BJ (cell line): ENCODE measurements at regions of chr17 and their contacts with region 1.

Region 1: DNA sequence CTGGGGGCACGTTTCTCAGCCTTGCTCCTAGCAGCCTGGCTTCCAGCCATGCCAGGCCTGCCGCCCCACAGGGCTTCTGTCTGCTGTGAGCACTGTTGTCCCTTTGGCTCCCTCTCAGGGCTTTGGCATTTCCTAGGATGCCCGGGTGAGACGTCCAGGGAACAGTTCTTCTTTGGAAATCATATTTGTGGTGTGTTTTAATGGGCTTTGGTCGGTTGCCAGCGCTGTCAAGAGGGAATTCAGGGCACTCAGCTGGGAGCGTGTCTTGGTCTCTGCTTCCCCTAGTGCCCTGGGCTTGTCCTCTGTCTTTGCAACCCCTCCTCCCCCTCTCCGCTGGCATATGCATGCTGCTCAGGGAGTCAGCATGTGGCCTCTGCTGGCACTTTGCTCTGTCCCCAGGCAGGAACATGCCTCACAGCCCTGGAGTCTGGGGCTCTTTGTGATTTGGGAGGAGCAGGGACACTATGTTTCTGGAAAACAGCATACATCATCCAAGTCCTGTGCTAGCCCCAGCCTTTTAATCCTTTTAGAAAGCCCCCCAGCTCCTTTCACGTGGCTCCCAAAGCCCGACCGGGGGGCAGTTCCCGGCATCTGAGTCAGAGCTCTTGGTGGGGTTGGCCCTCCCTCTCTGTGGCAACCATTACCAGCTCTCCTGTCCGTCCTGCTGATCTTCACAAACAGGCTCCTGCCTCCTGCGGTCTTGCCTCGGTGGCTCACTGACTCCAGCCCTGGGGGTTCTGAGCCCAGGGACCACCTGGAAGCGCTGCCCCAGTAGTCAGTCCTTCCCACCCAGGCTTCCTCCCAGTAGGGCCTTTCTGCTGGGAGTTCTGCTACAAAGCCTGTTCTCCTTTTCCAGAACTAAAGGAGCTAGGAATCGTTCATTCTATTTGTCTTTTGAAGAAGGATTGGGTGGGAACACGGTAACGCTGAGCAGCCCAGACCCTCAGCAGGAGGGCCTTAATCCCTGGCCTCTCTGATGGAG is 26.7 kb downstream of the SAP30BP start:
- DNase-seq: peak; percentile 93
- H3K4me3 ChIP-seq: no peak overlapping the region
- H3K27me3 ChIP-seq: no peaks in the 10 kb centered on the region
- CTCF ChIP-seq: peak; percentile 47

Region 2: GRCh38 chr17:75679706-75680442 is 13.9 kb before region 1 on chr17:
- CTCF ChIA-PET with region 1: interaction called, 44 read pairs
- POLR2A ChIA-PET with region 1: interaction called, 4 read pairs
- DNase-seq: peak; percentile 51
- H3K4me3 ChIP-seq: no peak overlapping the region
- H3K27me3 ChIP-seq: no peaks in the 10 kb centered on the region
- CTCF ChIP-seq: peak; percentile 34; the same call in 1 of the 2 replicates